CD8-positive, alpha-beta T cell (primary cell): ENCODE measurements at regions of chr17 and their contacts with region 1.

Region 1: DNA sequence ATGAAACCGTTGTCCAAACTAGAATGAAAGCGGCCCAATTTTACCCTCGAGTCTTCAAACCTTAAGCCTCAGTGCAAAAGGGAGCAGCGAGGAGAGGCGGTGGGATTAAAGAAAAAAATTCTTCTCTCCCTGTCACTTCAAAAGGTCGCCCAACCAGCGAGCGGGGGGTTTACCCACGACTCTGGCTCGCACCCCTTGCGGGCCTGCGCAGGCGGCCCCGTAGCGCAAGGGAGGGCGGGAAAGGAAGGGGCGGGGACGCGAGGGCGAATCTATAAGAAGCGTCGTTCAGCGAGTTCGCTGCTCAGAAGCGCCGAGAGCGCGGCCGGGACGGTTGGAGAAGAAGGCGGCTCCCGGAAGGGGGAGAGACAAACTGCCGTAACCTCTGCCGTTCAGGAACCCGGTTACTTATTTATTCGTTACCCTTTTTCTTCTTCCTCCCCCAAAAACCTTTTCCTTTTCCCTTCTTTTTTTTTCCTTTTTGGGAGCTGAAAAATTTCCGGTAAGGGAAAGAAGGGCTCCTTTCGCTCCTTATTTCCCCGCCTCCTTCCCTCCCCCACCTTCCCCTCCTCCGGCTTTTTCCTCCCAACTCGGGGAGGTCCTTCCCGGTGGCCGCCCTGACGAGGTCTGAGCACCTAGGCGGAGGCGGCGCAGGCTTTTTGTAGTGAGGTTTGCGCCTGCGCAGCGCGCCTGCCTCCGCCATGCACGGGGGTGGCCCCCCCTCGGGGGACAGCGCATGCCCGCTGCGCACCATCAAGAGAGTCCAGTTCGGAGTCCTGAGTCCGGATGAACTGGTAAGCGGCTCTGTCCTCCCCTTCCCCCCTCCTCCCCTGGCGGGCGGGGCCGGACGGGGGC is at the start of gene POLR2A:
- DNase-seq: peak; percentile 96 to 99 (median 98)
- ATAC-seq: peak; percentile 66
- H3K4me3 ChIP-seq: peak within 1 kb of the TSS; percentile 95 to 98
- H3K4me3 Mint-ChIP-seq: peak within 1 kb of the TSS; percentile 100
- H3K27ac ChIP-seq: peak within 1 kb of the TSS; percentile 99 to 100
- H3K27ac Mint-ChIP-seq: peak within 1 kb of the TSS; percentile 100
- H3K4me1 ChIP-seq: peaks cover 58% of the 10 kb centered on the region
- H3K4me1 Mint-ChIP-seq: peaks cover 74% of the 10 kb centered on the region
- H3K27me3 ChIP-seq: no peaks in the 10 kb centered on the region
- H3K27me3 Mint-ChIP-seq: no peaks in the 10 kb centered on the region
- CTCF ChIP-seq: no peak
- total RNA-seq, gene POLR2A: 508 to 546 TPM

Region 2: GRCh38 chr17:7014261-7014994 is 469.9 kb before region 1 on chr17:
- CTCF ChIA-PET with region 1: no interaction called
- POLR2A ChIA-PET with region 1: no interaction called
- intact Hi-C with region 1: loop called in 1 of 2 experiments (anchors 5 kb)
- DNase-seq: peak; percentile 94 to 100 (median 97)
- ATAC-seq: peak; percentile 79
- H3K4me3 ChIP-seq: peak overlapping the region; percentile 69 to 70
- H3K4me3 Mint-ChIP-seq: peak overlapping the region; percentile 98
- H3K27ac ChIP-seq: peak overlapping the region; percentile 95 to 99
- H3K27ac Mint-ChIP-seq: peak overlapping the region; percentile 100
- H3K4me1 ChIP-seq: peaks cover 63% of the 10 kb centered on the region
- H3K4me1 Mint-ChIP-seq: peaks cover 78% of the 10 kb centered on the region
- H3K27me3 ChIP-seq: no peaks in the 10 kb centered on the region
- H3K27me3 Mint-ChIP-seq: no peaks in the 10 kb centered on the region
- CTCF ChIP-seq: peak; percentile 61

Region 3: DNA sequence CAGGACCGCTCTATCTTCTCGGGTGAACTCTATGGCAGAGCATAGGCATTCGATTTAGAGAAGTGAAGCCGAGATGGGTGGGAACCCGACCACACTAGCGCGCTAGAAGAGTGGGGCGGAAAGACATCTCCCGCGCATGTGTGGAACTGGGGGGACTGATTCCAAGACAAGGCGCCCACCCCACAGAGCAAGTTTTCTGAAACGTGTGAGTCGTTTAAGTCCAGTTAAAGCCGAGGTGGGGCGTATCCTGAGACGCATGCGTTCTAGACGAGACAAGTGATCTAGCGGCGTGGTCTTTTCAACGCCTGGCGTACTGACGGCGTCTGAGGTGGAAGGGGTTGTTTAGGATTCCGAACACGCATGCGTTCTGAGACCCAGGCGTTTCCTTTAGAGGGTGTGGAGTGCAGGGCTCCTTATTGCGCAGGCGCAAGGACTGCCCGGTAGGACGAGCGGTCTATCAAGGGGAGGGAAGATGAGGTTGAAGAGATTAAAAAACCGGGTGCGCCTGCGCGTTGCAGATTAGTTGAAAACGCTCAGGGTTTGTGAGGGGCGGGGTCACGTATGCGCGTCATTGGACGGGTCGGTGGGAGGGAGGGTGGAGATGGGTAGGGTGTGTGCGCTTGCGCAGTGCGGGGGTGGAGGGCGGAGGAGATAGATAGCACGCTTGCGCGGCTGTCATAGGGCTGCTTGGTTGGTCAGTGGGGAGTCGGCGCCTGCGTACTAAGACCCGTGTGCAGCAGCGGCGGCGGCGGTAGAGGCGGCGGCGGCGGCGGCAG is 177.2 kb before region 1 on chr17 and contains the start of gene EIF5A:
- CTCF ChIA-PET with region 1: no interaction called
- POLR2A ChIA-PET with region 1: no interaction called
- intact Hi-C with region 1: loop called (anchors 1 to 2 kb)
- DNase-seq: peak; percentile 100
- ATAC-seq: peak; percentile 67
- H3K4me3 ChIP-seq: peak within 1 kb of the TSS; percentile 66 to 92
- H3K4me3 Mint-ChIP-seq: peak within 1 kb of the TSS; percentile 98
- H3K27ac ChIP-seq: peak within 1 kb of the TSS; percentile 91 to 94
- H3K27ac Mint-ChIP-seq: peak within 1 kb of the TSS; percentile 99
- H3K4me1 ChIP-seq: peaks cover 25% of the 10 kb centered on the region
- H3K4me1 Mint-ChIP-seq: peaks cover 40% of the 10 kb centered on the region
- H3K27me3 ChIP-seq: no peaks in the 10 kb centered on the region
- H3K27me3 Mint-ChIP-seq: no peaks in the 10 kb centered on the region
- CTCF ChIP-seq: no peak
- total RNA-seq, gene EIF5A: 581 to 613 TPM

Region 4: DNA sequence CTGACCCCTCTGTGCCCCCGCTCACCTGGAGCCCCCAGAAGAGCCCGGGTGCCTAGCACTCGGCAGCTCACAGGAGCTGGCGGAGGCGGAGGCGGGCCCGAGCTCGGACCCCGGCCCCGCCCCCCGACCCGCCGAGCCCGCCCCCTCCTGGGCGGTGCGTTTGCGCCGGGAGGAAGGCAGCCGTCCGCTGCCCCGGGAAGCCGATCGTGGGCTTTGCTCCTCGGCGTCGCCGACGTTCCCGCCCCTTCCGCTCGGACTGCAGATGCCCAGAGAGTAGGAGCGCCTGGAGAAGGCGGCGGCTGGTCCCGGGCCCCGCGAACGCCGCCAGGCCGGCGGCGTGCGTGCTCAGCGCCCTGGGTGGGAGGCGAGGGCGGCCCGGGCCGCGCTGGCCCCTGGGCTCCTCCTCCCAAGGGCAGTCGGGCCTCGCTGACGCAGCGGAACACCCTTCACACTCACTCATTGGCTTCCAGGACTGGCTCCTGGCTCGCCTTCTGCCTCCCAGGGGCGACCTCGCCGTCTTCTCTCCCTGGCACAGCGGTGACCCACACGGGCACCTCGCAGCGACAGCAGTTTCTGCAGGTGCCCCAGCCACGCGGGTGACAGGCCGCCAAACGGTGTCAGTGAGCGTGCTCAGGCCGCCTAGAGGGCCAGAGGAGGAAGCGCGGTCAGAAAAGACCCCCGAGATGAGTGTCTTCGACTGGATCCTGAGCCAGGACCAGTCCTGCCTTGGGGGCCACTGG is 89.7 kb before region 1 on chr17 and contains the start of gene PLSCR3:
- CTCF ChIA-PET with region 1: interaction called, 3 read pairs
- POLR2A ChIA-PET with region 1: interaction called, 3 read pairs
- intact Hi-C with region 1: loop called in 1 of 2 experiments (anchors 2 kb)
- DNase-seq: peak; percentile 65 to 92 (median 80)
- ATAC-seq: peak; percentile 88
- H3K4me3 ChIP-seq: peak within 1 kb of the TSS; percentile 81 to 84
- H3K4me3 Mint-ChIP-seq: peak within 1 kb of the TSS; percentile 92
- H3K27ac ChIP-seq: peak within 1 kb of the TSS; percentile 68 to 72
- H3K27ac Mint-ChIP-seq: peak within 1 kb of the TSS; percentile 92
- H3K4me1 ChIP-seq: peaks cover 33% of the 10 kb centered on the region
- H3K4me1 Mint-ChIP-seq: peaks cover 26% of the 10 kb centered on the region
- H3K27me3 ChIP-seq: no peaks in the 10 kb centered on the region
- H3K27me3 Mint-ChIP-seq: no peaks in the 10 kb centered on the region
- CTCF ChIP-seq: no peak
- total RNA-seq, gene PLSCR3: 38.1 TPM

Region 5: DNA sequence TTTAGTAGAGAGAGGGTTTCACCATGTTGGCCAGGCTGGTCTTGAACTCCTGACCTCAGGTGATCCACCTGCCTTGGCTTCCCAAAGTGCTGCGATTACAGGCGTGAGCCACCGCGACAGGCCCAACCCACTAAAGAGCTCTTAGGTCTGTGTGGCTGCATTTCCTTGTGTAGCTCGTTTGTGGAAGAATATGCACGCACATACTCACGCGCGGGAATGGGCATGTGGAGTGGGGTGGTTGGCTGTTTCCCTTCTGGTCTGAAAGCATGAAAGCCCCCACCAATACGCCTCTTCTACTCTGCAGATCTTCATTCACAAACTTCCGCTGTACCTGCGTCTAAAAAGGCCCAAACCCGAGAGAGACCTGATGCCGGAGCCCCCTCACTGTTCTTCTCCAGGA is 29.3 kb before region 1 on chr17:
- CTCF ChIA-PET with region 1: interaction called, 4 read pairs
- POLR2A ChIA-PET with region 1: interaction called, 68 read pairs
- intact Hi-C with region 1: loop called (anchors 1 kb)
- DNase-seq: no peak
- ATAC-seq: peak; percentile 35
- H3K4me3 ChIP-seq: peak overlapping the region; percentile 82 to 83
- H3K4me3 Mint-ChIP-seq: peak overlapping the region; percentile 98
- H3K27ac ChIP-seq: peak overlapping the region; percentile 60 to 74
- H3K27ac Mint-ChIP-seq: peak overlapping the region; percentile 91
- H3K4me1 ChIP-seq: peaks cover 15% of the 10 kb centered on the region
- H3K4me1 Mint-ChIP-seq: peaks cover 24% of the 10 kb centered on the region
- H3K27me3 ChIP-seq: no peaks in the 10 kb centered on the region
- H3K27me3 Mint-ChIP-seq: no peaks in the 10 kb centered on the region
- CTCF ChIP-seq: no peak

Region 6: GRCh38 chr17:7515911-7516610 is 31.8 kb after region 1 on chr17:
- CTCF ChIA-PET with region 1: interaction called, 11 read pairs
- POLR2A ChIA-PET with region 1: interaction called, 5 read pairs
- intact Hi-C with region 1: no loop called
- DNase-seq: no peak
- ATAC-seq: no peak
- H3K4me3 ChIP-seq: no peak overlapping the region
- H3K4me3 Mint-ChIP-seq: no peak overlapping the region
- H3K27ac ChIP-seq: no peak overlapping the region
- H3K27ac Mint-ChIP-seq: no peak overlapping the region
- H3K4me1 ChIP-seq: no peaks in the 10 kb centered on the region
- H3K4me1 Mint-ChIP-seq: peaks cover 2% of the 10 kb centered on the region
- H3K27me3 ChIP-seq: no peaks in the 10 kb centered on the region
- H3K27me3 Mint-ChIP-seq: no peaks in the 10 kb centered on the region
- CTCF ChIP-seq: no peak

Region 7: GRCh38 chr17:7844292-7845154 is 360.2 kb after region 1 on chr17:
- CTCF ChIA-PET with region 1: no interaction called
- POLR2A ChIA-PET with region 1: no interaction called
- intact Hi-C with region 1: loop called (anchors 5 kb)
- DNase-seq: peak; percentile 67 to 94 (median 79)
- ATAC-seq: peak; percentile 8
- H3K4me3 ChIP-seq: peak overlapping the region; percentile 94 to 98
- H3K4me3 Mint-ChIP-seq: peak overlapping the region; percentile 91
- H3K27ac ChIP-seq: peak overlapping the region; percentile 98 to 100
- H3K27ac Mint-ChIP-seq: peak overlapping the region; percentile 99
- H3K4me1 ChIP-seq: peaks cover 39% of the 10 kb centered on the region
- H3K4me1 Mint-ChIP-seq: peaks cover 33% of the 10 kb centered on the region
- H3K27me3 ChIP-seq: no peaks in the 10 kb centered on the region
- H3K27me3 Mint-ChIP-seq: no peaks in the 10 kb centered on the region
- CTCF ChIP-seq: no peak